ENCODE measurements at regions of chr12 and their contacts with region 1.

Region 1: GRCh38 chr12:28172434-28173030 is 17.7 kb upstream of the CCDC91 start:
- DNase-seq: no peak
- H3K4me3 ChIP-seq: no peak overlapping the region
- H3K27ac ChIP-seq: no peak overlapping the region
- H3K4me1 ChIP-seq: no peaks in the 10 kb centered on the region
- H3K27me3 ChIP-seq: no peaks in the 10 kb centered on the region
- CTCF ChIP-seq: peak; percentile 21 to 67 (median 56)

Region 2: GRCh38 chr12:27969624-27970400 is 202.7 kb before region 1 on chr12:
- intact Hi-C with region 1: loop called (anchors 1 kb)
- DNase-seq: peak in 1 of 2 donors; percentile 74
- H3K4me3 ChIP-seq: peak overlapping the region; percentile 64 to 81
- H3K27ac ChIP-seq: peak overlapping the region; percentile 62 to 81
- H3K4me1 ChIP-seq: peaks cover 0 to 20% of the 10 kb centered on the region in 2 donors
- H3K27me3 ChIP-seq: no peaks in the 10 kb centered on the region
- CTCF ChIP-seq: peak in 1 of 3 experiments; percentile 40

Region 3: GRCh38 chr12:28065889-28066630 is 106.5 kb before region 1 on chr12:
- intact Hi-C with region 1: loop called (anchors 5 kb)
- DNase-seq: no peak
- H3K4me3 ChIP-seq: peak overlapping the region in 1 of 2 donors; percentile 12
- H3K27ac ChIP-seq: peak overlapping the region; percentile 49 to 74
- H3K4me1 ChIP-seq: peaks cover 0 to 5% of the 10 kb centered on the region in 2 donors
- H3K27me3 ChIP-seq: no peaks in the 10 kb centered on the region
- CTCF ChIP-seq: no peak